Mammary epithelial cell (primary cell): ENCODE measurements at regions of chr12 and their contacts with region 1.

Region 1: DNA sequence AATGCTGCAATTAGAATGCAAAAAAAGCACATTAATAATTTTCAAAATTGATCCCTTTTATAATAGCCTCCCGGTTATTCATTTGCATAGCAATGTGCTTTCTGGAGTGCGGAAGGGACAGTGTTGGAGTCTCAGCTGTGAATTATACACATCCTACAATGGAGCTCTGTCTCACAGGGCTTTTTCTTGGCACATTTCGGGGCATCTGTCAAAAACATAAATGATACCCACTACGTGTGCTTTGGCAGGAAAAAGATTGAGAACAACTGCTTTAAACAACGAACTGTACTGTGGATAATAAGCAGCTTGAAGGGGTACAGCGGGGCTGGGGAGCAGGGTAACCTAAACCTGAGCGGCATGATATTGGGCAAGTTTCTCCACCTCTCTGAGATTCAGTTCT is 123.1 kb downstream of the PAH start:
- DNase-seq: no peak
- H3K4me3 ChIP-seq: no peak overlapping the region
- H3K27ac ChIP-seq: no peak overlapping the region
- H3K4me1 ChIP-seq: no peaks in the 10 kb centered on the region
- H3K27me3 ChIP-seq: peaks cover 2% of the 10 kb centered on the region
- CTCF ChIP-seq: no peak

Region 2: DNA sequence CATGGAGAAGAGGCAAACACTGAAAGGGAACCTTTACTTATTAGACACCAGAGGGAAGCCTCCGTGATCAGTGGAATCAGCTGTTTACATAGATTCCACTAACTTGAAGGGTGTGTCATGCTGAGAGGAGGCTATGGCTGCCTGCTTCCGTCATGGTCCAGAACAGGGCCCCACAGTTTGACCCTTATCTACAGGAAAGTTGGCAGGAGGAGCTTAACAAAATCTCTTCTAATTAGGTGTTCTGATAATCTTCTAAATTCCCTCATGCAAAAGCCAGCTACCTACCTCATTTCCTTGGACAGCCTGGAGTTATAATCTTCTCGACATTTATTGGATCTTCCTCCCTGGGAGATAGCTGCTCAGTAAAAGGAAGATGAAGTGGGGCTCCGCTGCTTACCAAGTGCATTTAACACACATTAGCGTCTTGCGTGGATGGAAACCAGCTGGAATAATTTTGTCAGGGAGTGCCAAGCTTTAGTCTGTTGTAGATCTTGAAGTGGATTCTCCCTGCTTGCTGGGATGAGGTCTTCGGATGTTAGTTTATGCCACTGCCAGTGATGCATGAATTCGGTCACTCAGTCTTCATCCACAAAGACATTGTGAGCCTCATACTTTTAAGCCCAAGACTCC is 47.8 kb before region 1 on chr12:
- CTCF ChIA-PET with region 1: no interaction called
- dilution Hi-C with region 1: loop called (anchors 5 kb)
- in situ Hi-C with region 1: no loop called
- intact Hi-C with region 1: no loop called
- DNase-seq: no peak
- H3K4me3 ChIP-seq: no peak overlapping the region
- H3K27ac ChIP-seq: no peak overlapping the region
- H3K4me1 ChIP-seq: no peaks in the 10 kb centered on the region
- H3K27me3 ChIP-seq: no peaks in the 10 kb centered on the region
- CTCF ChIP-seq: no peak

Region 3: GRCh38 chr12:102824218-102824835 is 30.4 kb after region 1 on chr12:
- CTCF ChIA-PET with region 1: no interaction called
- dilution Hi-C with region 1: no loop called
- in situ Hi-C with region 1: no loop called
- intact Hi-C with region 1: no loop called
- DNase-seq: peak; percentile 20
- H3K4me3 ChIP-seq: no peak overlapping the region
- H3K27ac ChIP-seq: no peak overlapping the region
- H3K4me1 ChIP-seq: no peaks in the 10 kb centered on the region
- H3K27me3 ChIP-seq: no peaks in the 10 kb centered on the region
- CTCF ChIP-seq: no peak

Region 4: DNA sequence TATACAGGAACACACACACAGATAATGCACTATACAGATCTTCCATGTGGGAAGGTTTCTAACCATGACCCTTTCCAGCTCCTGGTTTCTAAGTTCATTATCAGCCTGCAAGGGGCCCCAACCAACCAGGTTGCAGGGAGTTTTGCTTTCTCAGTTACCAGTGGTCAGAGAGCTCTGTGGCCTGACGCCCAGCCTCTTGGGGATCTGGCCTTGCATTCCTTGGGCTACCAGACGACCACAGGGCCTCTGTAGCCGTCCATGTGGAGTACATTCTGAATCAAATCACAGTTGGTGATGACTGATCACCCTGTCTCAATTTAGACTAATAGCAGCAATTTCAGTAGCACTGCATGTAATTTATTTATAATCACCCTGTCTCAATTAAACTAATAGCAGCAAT is 75.7 kb after region 1 on chr12:
- CTCF ChIA-PET with region 1: no interaction called
- dilution Hi-C with region 1: loop called (anchors 5 kb)
- in situ Hi-C with region 1: no loop called
- intact Hi-C with region 1: no loop called
- DNase-seq: no peak
- H3K4me3 ChIP-seq: no peak overlapping the region
- H3K27ac ChIP-seq: no peak overlapping the region
- H3K4me1 ChIP-seq: no peaks in the 10 kb centered on the region
- H3K27me3 ChIP-seq: peaks cover 2% of the 10 kb centered on the region
- CTCF ChIP-seq: no peak